A549 (cell line): ENCODE measurements at regions of chr1 and their contacts with region 1.

Region 1: DNA sequence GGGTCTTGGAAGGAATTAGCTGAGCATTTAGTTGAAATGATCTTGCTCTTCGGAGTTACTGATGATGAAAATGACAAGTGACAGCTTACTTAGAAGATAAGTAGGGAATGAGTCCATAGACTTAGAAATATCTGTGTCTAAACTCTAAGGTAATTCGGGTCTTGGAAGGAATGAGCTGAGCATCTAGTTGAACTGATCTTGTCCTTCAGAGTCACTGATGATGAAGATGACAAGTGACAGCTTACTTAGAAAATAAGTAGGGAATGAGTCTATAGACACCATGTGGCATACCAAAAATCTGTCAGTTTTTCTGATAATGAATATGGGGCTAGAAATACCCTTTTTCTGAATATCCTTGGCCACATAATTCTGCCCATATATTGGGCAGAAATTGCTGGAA is 14.7 kb downstream of the CTTNBP2NL start:
- DNase-seq: no peak
- ATAC-seq: no peak
- H3K4me3 ChIP-seq: no peak overlapping the region
- H3K27ac ChIP-seq: no peak overlapping the region
- H3K4me1 ChIP-seq: no peaks in the 10 kb centered on the region
- CTCF ChIP-seq: no peak
- EP300 ChIP-seq: no peak
- POLR2A ChIP-seq: no peak
- RAD21 ChIP-seq: no peak

Region 2: GRCh38 chr1:112358798-112359408 is 51.8 kb before region 1 on chr1:
- CTCF ChIA-PET with region 1: no interaction called
- POLR2A ChIA-PET with region 1: no interaction called
- DNase-seq: peak; percentile 23 to 36
- ATAC-seq: peak; percentile 95 to 97
- H3K4me3 ChIP-seq: no peak overlapping the region
- H3K27ac ChIP-seq: no peak overlapping the region
- H3K4me1 ChIP-seq: no peaks in the 10 kb centered on the region
- CTCF ChIP-seq: peak; percentile 53
- EP300 ChIP-seq: no peak
- POLR2A ChIP-seq: no peak
- RAD21 ChIP-seq: peak; percentile 56 to 58

Region 3: DNA sequence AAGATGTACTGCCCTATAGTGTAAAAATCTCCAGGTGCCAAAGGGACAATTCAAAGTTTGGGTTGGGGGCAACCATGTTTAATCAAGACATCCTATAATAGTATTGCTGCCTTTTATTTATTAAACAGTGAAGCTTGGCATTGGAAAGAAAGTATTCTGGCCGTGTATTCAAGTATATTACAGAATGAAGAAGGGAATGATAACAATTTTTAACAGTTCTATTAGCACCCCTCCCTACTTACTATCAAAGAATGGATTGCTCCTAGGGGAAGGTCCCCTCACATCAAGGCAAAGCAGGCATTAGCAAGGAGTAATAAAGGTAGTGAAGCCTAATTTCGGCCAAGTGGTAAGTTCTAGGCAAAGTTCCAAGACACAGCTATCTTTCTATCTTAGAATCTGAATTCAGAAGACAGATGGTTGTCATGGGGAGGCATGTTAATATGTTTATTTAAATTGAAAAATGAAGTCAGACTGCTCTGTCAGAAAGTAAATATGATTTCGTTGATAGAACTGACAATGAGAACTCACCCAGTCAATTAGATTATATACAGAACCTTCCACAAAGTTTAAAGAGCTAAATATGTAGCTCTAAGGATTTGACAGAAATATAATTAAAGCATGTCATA is 183.7 kb after region 1 on chr1:
- CTCF ChIA-PET with region 1: no interaction called
- POLR2A ChIA-PET with region 1: interaction called, 13 read pairs
- DNase-seq: no peak
- ATAC-seq: no peak
- H3K4me3 ChIP-seq: no peak overlapping the region
- H3K27ac ChIP-seq: no peak overlapping the region
- H3K4me1 ChIP-seq: no peaks in the 10 kb centered on the region
- CTCF ChIP-seq: no peak
- EP300 ChIP-seq: no peak
- POLR2A ChIP-seq: no peak
- RAD21 ChIP-seq: no peak